ENCODE measurements at regions of chr3 and their contacts with region 1.

Region 1: GRCh38 chr3:128680602-128681368 is 30.2 kb upstream of the RPN1 start:
- DNase-seq: peak; percentile 96
- H3K4me3 Mint-ChIP-seq: peak overlapping the region; percentile 84
- H3K27ac Mint-ChIP-seq: peak overlapping the region; percentile 98
- H3K4me1 Mint-ChIP-seq: peaks cover 22% of the 10 kb centered on the region
- H3K27me3 Mint-ChIP-seq: no peaks in the 10 kb centered on the region

Region 2: DNA sequence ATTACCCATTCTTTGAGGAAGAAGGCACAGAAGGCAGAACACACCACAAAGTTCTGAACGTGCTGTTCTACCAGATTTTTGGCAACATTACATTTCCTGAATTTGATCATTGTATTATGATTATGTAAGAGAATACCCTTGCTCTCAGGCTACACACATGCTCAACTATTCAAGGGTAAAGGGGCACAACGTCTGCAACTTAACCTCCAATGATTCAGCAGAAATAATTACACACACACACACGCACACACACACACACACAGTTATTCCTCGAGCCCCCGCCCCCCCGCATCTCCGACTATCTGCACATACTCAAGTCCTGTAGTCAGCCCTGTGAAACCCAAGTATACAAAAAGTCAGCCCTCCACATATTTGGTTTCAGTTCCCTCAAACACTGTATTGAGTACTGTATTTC is 57.0 kb before region 1 on chr3:
- intact Hi-C with region 1: no loop called
- DNase-seq: no peak
- H3K4me3 Mint-ChIP-seq: no peak overlapping the region
- H3K27ac Mint-ChIP-seq: no peak overlapping the region
- H3K4me1 Mint-ChIP-seq: peaks cover 20% of the 10 kb centered on the region
- H3K27me3 Mint-ChIP-seq: no peaks in the 10 kb centered on the region

Region 3: GRCh38 chr3:128650096-128651050 is 30.4 kb before region 1 on chr3 and contains the start of gene RPN1:
- intact Hi-C with region 1: loop called (anchors 1 kb)
- DNase-seq: peak; percentile 94
- H3K4me3 Mint-ChIP-seq: peak within 1 kb of the TSS; percentile 85
- H3K27ac Mint-ChIP-seq: peak within 1 kb of the TSS; percentile 89
- H3K4me1 Mint-ChIP-seq: peaks cover 25% of the 10 kb centered on the region
- H3K27me3 Mint-ChIP-seq: no peaks in the 10 kb centered on the region
- total RNA-seq, gene RPN1: 212 and 217 TPM in 2 replicates

Region 4: GRCh38 chr3:128794770-128795649 is 114.2 kb after region 1 on chr3:
- intact Hi-C with region 1: loop called (anchors 1 kb)
- DNase-seq: peak; percentile 61
- H3K4me3 Mint-ChIP-seq: peak overlapping the region; percentile 49
- H3K27ac Mint-ChIP-seq: peak overlapping the region; percentile 93
- H3K4me1 Mint-ChIP-seq: peaks cover 63% of the 10 kb centered on the region
- H3K27me3 Mint-ChIP-seq: no peaks in the 10 kb centered on the region

Region 5: GRCh38 chr3:128845778-128846485 is 165.1 kb after region 1 on chr3:
- intact Hi-C with region 1: loop called (anchors 1 kb)
- DNase-seq: peak; percentile 78
- H3K4me3 Mint-ChIP-seq: peak overlapping the region; percentile 51
- H3K27ac Mint-ChIP-seq: peak overlapping the region; percentile 91
- H3K4me1 Mint-ChIP-seq: peaks cover 18% of the 10 kb centered on the region
- H3K27me3 Mint-ChIP-seq: no peaks in the 10 kb centered on the region

Measured in activated T-helper 2 cell treated with anti-CD3 and anti-CD28 coated beads, Interferon-gamma antibody, Interleukin-2, Interleukin-4, amounts not matched to agents 10 μg/mL and 5 μg/mL and 100 μg/mL, durations not matched to agents 14 hours and 24 hours and 36 hours (primary cell).